T-cell (primary cell): ENCODE measurements at regions of chr4 and their contacts with region 1.

Region 1: GRCh38 chr4:122716825-122717448 is 15.6 kb upstream of the BBS12 start:
- DNase-seq: peak; percentile 30 to 81 (median 58)
- ATAC-seq: peak; percentile 76 to 96 (median 84)
- H3K4me3 ChIP-seq: no peak overlapping the region
- H3K4me3 Mint-ChIP-seq: no peak overlapping the region
- H3K27ac ChIP-seq: no peak overlapping the region
- H3K27ac Mint-ChIP-seq: no peak overlapping the region
- H3K4me1 ChIP-seq: peaks cover 0 to 3% of the 10 kb centered on the region in 2 experiments
- H3K4me1 Mint-ChIP-seq: peaks cover 5 to 12% (median 11%) of the 10 kb centered on the region in 3 donors
- H3K27me3 ChIP-seq: no peaks in the 10 kb centered on the region
- H3K27me3 Mint-ChIP-seq: no peaks in the 10 kb centered on the region

Region 2: DNA sequence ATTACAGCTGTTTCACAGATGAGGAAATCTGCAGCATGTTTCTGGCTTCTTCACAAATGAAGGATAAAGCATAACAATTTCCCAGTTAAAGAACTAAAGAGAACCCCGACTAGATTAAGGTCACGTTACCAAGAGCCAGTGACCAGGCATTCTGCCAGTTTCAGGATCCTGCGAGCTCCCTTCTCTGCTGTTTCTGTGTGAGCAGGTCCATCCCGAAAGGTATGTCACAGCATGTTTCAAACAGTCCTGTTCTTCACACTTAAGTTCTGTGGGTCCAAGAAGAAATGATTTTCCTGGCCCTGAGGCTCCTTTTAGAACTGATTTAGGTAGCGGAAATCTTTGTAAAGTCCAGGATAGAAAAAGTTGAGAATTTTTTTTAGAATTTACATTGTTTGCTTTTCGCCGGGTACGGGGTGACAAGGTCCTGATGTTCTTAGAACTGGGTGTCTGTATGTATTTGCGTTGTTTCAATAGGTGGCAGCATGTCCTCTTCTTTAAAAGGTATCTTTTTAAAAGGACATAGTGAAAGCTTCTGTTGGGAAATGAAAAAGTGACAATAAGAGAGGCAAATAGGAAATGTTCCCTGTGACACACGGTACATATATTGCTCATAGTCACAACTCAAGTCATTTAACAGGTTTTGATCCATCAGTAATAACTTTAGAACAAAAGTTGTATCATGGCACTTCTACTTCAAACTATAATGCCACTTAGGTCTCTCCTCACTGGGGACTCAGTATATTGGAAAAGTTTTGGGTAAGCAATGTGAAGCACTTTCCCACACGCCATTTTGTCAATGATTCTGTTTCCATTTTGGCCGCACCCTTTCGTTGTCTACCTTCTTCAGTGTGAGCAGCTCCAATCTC is 114.4 kb before region 1 on chr4:
- CTCF ChIA-PET with region 1: interaction called, 8 to 12 read pairs
- POLR2A ChIA-PET with region 1: no interaction called
- DNase-seq: peak in 1 of 35 experiments; percentile 56
- ATAC-seq: peak in 3 of 4 experiments; percentile 35 to 68 (median 41)
- H3K4me3 ChIP-seq: no peak overlapping the region
- H3K4me3 Mint-ChIP-seq: peak overlapping the region in 1 of 3 donors; percentile 0
- H3K27ac ChIP-seq: no peak overlapping the region
- H3K27ac Mint-ChIP-seq: no peak overlapping the region
- H3K4me1 ChIP-seq: peaks cover 0 to 3% of the 10 kb centered on the region in 2 experiments
- H3K4me1 Mint-ChIP-seq: peaks cover 0 to 6% (median 4%) of the 10 kb centered on the region in 3 donors
- H3K27me3 ChIP-seq: peaks cover 0 to 2% of the 10 kb centered on the region in 2 experiments
- H3K27me3 Mint-ChIP-seq: peaks cover 7 to 16% of the 10 kb centered on the region in 2 donors

Region 3: GRCh38 chr4:122732329-122733026 is 15.5 kb after region 1 on chr4 and contains the start of gene BBS12:
- CTCF ChIA-PET with region 1: interaction called, 6 to 15 read pairs
- POLR2A ChIA-PET with region 1: no interaction called
- DNase-seq: peak; percentile 95 to 100 (median 98)
- ATAC-seq: peak; percentile 97 to 99 (median 99)
- H3K4me3 ChIP-seq: peak within 1 kb of the TSS; percentile 87 to 96
- H3K4me3 Mint-ChIP-seq: peak within 1 kb of the TSS; percentile 96 to 98 (median 98)
- H3K27ac ChIP-seq: peak within 1 kb of the TSS; percentile 86
- H3K27ac Mint-ChIP-seq: peak within 1 kb of the TSS; percentile 95 to 96
- H3K4me1 ChIP-seq: peaks cover 7 to 12% of the 10 kb centered on the region in 2 experiments
- H3K4me1 Mint-ChIP-seq: peaks cover 23 to 27% (median 24%) of the 10 kb centered on the region in 3 donors
- H3K27me3 ChIP-seq: no peaks in the 10 kb centered on the region
- H3K27me3 Mint-ChIP-seq: no peaks in the 10 kb centered on the region
- total RNA-seq, gene BBS12: 0.43 to 4.6 (median 3.2) TPM